ENCODE measurements at regions of chr13 and their contacts with region 1.

Region 1: GRCh38 chr13:114226699-114227323 is 7.9 kb upstream of the CDC16 start:
- DNase-seq: peak; percentile 77
- H3K4me3 Mint-ChIP-seq: peak overlapping the region; percentile 26
- H3K27ac Mint-ChIP-seq: no peak overlapping the region
- H3K4me1 Mint-ChIP-seq: peaks cover 41% of the 10 kb centered on the region
- H3K27me3 Mint-ChIP-seq: peaks cover 17% of the 10 kb centered on the region

Region 2: DNA sequence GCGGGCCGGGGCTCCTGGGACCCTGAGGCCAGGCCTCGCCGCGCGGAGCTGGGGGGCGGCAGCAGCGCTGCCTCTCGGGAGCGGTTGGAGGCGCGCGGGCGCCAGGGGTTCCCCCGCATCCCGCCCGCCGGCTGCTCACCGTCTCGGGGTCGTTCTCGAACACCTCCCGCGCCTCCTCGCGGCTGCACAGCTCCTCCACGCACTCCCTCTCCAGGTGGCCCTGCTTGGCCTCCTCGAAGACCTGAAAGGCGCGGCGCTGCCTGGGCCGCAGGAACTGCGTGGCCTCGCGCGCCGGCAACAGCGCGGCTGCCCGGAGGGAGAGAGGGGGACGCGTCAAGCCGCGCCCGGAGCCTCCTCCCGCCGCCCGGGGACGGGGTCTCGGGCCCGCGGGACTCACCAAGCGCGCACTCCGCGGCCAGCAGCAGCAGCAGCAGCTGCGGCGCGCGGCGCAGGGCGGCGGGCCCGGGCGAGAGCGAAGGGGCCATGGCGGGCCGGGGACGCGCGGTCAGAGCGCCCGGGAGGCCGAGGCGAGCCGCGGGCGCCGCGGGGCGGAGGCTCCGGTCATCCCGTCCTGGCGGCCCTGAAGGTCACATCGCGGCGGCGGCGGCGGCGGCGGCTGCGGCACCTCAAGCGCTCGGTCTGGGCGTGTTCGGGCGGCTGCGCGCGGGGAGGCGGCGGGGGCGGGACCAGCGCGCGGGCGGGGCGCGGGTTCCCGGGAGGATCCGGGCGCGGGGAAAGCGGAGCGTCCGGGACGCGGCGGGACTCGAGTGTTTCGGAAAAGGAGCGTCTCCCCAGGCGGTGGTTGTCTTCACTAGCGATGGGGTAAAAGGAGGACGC is 363.2 kb before region 1 on chr13 and contains the start of gene GAS6:
- intact Hi-C with region 1: loop called (anchors 5 kb)
- DNase-seq: no peak
- H3K4me3 Mint-ChIP-seq: peak within 1 kb of the TSS; percentile 67
- H3K27ac Mint-ChIP-seq: no peak within 1 kb of the TSS
- H3K4me1 Mint-ChIP-seq: peaks cover 5% of the 10 kb centered on the region
- H3K27me3 Mint-ChIP-seq: peaks cover 38% of the 10 kb centered on the region
- total RNA-seq, gene GAS6: 0.62 and 0.98 TPM in 2 replicates

Region 3: GRCh38 chr13:114047358-114047881 is 179.4 kb before region 1 on chr13:
- intact Hi-C with region 1: loop called (anchors 5 kb)
- DNase-seq: no peak
- H3K4me3 Mint-ChIP-seq: no peak overlapping the region
- H3K27ac Mint-ChIP-seq: no peak overlapping the region
- H3K4me1 Mint-ChIP-seq: peaks cover 51% of the 10 kb centered on the region
- H3K27me3 Mint-ChIP-seq: no peaks in the 10 kb centered on the region

Region 4: GRCh38 chr13:114110091-114110829 is 116.6 kb before region 1 on chr13:
- intact Hi-C with region 1: loop called (anchors 2 kb)
- DNase-seq: peak; percentile 70
- H3K4me3 Mint-ChIP-seq: peak overlapping the region; percentile 83
- H3K27ac Mint-ChIP-seq: peak overlapping the region; percentile 95
- H3K4me1 Mint-ChIP-seq: peaks cover 62% of the 10 kb centered on the region
- H3K27me3 Mint-ChIP-seq: no peaks in the 10 kb centered on the region

Region 5: DNA sequence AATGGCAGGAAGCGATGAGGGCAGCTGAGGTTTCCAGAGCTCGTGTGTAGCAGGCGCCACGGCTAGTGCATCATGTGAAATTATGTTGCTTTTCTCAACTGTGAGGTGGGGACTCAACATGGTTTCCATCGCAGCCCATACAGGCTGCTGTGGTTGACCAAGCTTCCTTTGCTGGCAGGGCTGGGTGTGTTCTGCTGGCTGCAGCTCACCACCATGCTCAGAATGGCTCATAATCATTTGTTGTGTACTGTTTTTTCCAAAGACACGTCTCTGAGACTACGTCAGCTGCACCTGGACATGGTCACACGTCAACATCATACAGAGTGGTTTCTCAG is 78.3 kb before region 1 on chr13:
- intact Hi-C with region 1: loop called (anchors 2 kb)
- DNase-seq: peak; percentile 90
- H3K4me3 Mint-ChIP-seq: peak overlapping the region; percentile 69
- H3K27ac Mint-ChIP-seq: peak overlapping the region; percentile 85
- H3K4me1 Mint-ChIP-seq: peaks cover 84% of the 10 kb centered on the region
- H3K27me3 Mint-ChIP-seq: peaks cover 2% of the 10 kb centered on the region

Region 6: DNA sequence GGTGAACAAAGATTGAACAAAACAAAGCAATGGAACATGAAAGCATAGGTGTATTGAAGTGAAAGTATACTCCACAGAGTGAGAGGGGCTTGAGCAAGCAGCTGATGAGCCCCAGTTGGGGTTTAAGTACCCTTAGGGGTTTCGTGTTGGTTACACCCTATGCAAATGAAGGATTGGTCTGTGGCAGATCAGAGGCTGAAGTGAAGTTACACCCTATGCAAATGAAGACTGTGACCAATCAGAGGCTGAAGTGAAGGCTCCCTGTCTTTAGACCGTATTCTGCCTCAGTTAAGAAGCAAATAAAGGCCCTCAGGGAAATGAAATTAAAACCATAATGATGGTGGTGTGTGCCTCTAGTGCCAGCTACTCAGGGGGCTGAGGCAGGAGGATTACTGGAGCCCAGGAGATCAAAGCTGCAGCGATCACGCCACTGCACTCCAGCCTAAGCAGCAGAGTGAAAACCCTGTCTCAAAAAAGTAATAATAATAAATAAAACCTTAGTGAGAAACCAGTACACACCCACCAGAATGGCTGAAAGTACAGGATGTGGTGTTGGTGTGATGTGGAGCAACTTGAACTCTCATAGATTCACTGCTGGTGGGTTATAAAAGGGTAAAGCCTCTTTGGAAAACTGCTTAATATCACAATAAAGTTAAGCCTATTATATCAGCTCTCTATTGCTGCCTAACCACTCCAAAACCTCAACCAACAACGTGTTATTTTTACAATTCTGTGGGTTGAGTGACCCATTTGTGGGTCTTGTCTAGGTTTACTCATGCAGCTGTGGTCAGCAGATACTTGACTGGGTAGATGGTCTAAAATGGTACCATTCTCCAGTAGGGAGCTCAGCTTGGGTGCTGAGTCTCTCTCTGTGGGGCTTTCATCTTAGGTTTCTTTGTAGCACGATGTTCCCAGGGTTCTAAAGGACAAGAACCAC is 41.8 kb after region 1 on chr13:
- intact Hi-C with region 1: no loop called
- DNase-seq: no peak
- H3K4me3 Mint-ChIP-seq: no peak overlapping the region
- H3K27ac Mint-ChIP-seq: peak overlapping the region; percentile 47
- H3K4me1 Mint-ChIP-seq: peaks cover 32% of the 10 kb centered on the region
- H3K27me3 Mint-ChIP-seq: no peaks in the 10 kb centered on the region